ENCODE measurements at regions of chr17 and their contacts with region 1.

Region 1: GRCh38 chr17:50026901-50027630 is 28.8 kb upstream of the ITGA3 start:
- DNase-seq: peak; percentile 83
- H3K4me3 ChIP-seq: peak overlapping the region in 1 of 3 experiments; percentile 6
- H3K27ac ChIP-seq: peak overlapping the region; percentile 62
- H3K4me1 ChIP-seq: peaks cover 20% of the 10 kb centered on the region
- H3K27me3 ChIP-seq: no peaks in the 10 kb centered on the region
- CTCF ChIP-seq: peak; percentile 90 to 94
- POLR2A ChIP-seq: no peak

Region 2: GRCh38 chr17:49987681-49988441 is 39.2 kb before region 1 on chr17:
- CTCF ChIA-PET with region 1: no interaction called
- POLR2A ChIA-PET with region 1: no interaction called
- dilution Hi-C with region 1: no loop called
- intact Hi-C with region 1: no loop called
- DNase-seq: no peak
- H3K4me3 ChIP-seq: no peak overlapping the region
- H3K27ac ChIP-seq: no peak overlapping the region
- H3K4me1 ChIP-seq: no peaks in the 10 kb centered on the region
- H3K27me3 ChIP-seq: peaks cover 30 to 46% of the 10 kb centered on the region in 2 experiments
- CTCF ChIP-seq: no peak
- POLR2A ChIP-seq: no peak

Region 3: DNA sequence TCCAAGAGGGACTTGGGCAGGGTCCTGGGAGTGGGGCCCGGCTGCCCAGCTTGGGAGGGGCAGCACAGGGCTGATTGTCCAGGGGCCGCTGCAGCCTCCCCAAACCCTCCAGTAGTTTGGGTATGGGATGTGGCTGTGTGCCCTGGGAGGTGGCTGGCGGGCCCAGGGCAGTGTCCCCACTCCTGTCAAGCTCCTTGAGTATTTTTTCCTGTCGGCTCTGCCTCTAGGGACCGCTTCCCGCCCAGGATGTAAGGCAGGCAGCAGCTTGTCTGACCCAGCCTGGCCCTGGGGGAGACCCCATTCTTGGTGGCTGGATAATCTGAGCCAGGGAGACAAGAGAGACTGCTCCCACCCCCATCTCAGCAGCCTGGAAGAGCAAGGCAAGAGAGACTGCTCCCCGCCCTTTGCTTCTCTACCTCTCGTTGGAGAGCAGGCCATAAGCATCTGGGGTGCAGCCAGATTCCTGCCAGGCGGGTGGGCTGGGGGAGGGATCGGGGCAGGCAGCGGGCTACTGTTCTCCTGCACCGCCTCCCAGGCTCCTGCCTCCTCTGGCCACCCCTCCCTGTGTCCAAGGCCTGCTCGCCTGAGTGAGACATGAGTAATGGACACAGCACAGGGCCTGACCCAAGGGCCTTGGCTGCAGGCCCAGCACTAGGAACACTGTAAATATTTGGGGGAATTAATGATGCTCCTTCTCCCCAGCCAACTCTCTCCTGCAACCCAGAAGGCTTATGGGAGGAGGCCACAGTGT is 10.4 kb after region 1 on chr17:
- CTCF ChIA-PET with region 1: interaction called, 12 read pairs
- POLR2A ChIA-PET with region 1: no interaction called
- dilution Hi-C with region 1: no loop called
- intact Hi-C with region 1: no loop called
- DNase-seq: no peak
- H3K4me3 ChIP-seq: no peak overlapping the region
- H3K27ac ChIP-seq: no peak overlapping the region
- H3K4me1 ChIP-seq: no peaks in the 10 kb centered on the region
- H3K27me3 ChIP-seq: no peaks in the 10 kb centered on the region
- CTCF ChIP-seq: no peak
- POLR2A ChIP-seq: no peak

Region 4: GRCh38 chr17:50047488-50048126 is 20.5 kb after region 1 on chr17:
- CTCF ChIA-PET with region 1: interaction called, 146 read pairs
- POLR2A ChIA-PET with region 1: no interaction called
- dilution Hi-C with region 1: no loop called
- intact Hi-C with region 1: no loop called
- DNase-seq: peak; percentile 82
- H3K4me3 ChIP-seq: peak overlapping the region in 1 of 3 experiments; percentile 3
- H3K27ac ChIP-seq: peak overlapping the region; percentile 91
- H3K4me1 ChIP-seq: peaks cover 62% of the 10 kb centered on the region
- H3K27me3 ChIP-seq: no peaks in the 10 kb centered on the region
- CTCF ChIP-seq: no peak
- POLR2A ChIP-seq: peak; percentile 28

Region 5: DNA sequence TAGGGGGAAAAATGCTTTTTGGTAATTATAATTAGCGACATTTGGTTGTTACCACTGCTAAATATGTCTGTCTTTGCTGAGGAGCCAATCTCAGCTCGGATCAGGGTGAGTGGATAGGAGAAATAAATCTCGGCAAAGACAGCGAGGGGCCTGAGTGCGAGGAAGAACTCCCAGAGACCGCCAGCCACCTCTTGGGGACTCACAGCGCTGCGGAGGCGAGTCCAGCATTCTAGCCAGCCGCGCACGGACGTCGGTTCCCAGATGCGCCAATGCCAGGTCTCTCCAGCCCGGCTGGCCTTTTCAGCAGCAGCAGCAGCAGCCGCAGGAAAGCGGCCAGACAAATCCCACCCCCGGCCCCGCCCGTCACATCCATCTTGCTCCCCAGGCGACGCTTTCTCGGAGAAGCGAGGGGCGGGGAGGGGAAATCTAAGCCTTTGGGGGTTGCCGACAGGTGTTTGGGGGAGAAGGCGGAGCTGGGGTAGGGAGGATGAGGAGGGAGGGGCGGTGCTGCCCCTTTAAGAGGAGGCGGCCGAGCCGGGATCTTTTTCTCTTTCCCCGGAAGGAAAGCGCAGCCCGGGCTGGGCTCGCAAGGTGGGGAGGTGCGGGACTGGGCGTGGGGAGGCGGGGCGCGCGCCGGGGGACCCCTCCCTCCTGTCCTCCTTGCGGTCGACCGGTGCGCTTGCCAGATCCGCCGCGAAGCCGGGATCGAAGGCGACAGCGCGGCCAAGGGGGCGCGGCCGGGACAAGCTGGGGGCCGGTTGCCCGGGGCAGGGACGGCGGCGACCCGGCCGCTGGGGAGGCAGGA is 28.6 kb after region 1 on chr17 and contains the start of gene ITGA3:
- CTCF ChIA-PET with region 1: interaction called, 146 read pairs
- POLR2A ChIA-PET with region 1: interaction called, 13 read pairs
- dilution Hi-C with region 1: no loop called
- intact Hi-C with region 1: loop called (anchors 1 kb)
- DNase-seq: peak; percentile 80
- H3K4me3 ChIP-seq: peak within 1 kb of the TSS; percentile 65 to 77 (median 77)
- H3K27ac ChIP-seq: peak within 1 kb of the TSS; percentile 39
- H3K4me1 ChIP-seq: peaks cover 65% of the 10 kb centered on the region
- H3K27me3 ChIP-seq: no peaks in the 10 kb centered on the region
- CTCF ChIP-seq: no peak
- POLR2A ChIP-seq: peak; percentile 57
- total RNA-seq, gene ITGA3: 93.8 and 112 TPM in 2 replicates

Region 6: GRCh38 chr17:50064258-50065001 is 37.4 kb after region 1 on chr17:
- CTCF ChIA-PET with region 1: interaction called, 76 read pairs
- POLR2A ChIA-PET with region 1: no interaction called
- dilution Hi-C with region 1: no loop called
- intact Hi-C with region 1: no loop called
- DNase-seq: peak; percentile 82
- H3K4me3 ChIP-seq: no peak overlapping the region
- H3K27ac ChIP-seq: peak overlapping the region; percentile 63
- H3K4me1 ChIP-seq: peaks cover 38% of the 10 kb centered on the region
- H3K27me3 ChIP-seq: no peaks in the 10 kb centered on the region
- CTCF ChIP-seq: no peak
- POLR2A ChIP-seq: no peak

Region 7: DNA sequence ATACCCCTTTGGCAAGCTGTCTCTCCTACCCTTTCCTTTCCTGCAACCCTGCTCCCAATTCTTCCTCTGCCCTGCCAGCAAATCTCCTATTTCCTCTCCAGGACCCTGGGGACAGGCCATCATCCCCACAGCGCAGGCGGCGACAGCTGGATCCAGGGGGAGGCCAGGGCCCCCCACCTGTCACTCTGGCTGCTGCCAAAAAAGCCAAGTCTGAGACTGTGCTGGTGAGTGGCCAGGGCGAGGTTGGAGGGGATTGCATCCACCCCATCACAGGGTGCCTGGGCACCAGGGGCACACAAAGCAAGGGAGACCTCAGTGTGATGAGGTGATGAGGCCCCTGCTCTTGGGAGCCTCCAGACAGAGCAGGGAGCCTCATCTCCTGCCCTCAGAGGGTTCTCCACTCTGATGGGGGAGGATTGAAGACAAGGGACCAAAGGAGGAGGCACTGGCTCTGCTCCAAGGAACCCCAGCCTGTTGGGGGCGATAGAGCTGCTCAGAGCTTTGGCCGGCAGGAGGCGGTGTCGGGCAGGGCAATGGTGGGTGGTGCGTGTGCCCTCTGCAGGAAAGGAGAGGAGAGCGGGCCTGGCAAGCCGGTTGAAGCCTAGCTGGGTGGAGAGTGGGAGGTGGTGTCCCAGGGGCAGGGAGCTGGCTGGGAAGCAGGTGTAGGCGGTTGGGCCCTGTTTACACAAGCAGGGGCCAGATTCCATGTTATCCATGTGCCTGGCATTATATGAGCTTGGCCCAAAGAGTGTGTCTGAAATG is 52.4 kb after region 1 on chr17:
- CTCF ChIA-PET with region 1: interaction called, 84 read pairs
- POLR2A ChIA-PET with region 1: no interaction called
- dilution Hi-C with region 1: no loop called
- intact Hi-C with region 1: loop called (anchors 2 kb)
- DNase-seq: peak; percentile 17
- H3K4me3 ChIP-seq: no peak overlapping the region
- H3K27ac ChIP-seq: no peak overlapping the region
- H3K4me1 ChIP-seq: no peaks in the 10 kb centered on the region
- H3K27me3 ChIP-seq: no peaks in the 10 kb centered on the region
- CTCF ChIP-seq: peak; percentile 64 to 71
- POLR2A ChIP-seq: no peak

Region 8: DNA sequence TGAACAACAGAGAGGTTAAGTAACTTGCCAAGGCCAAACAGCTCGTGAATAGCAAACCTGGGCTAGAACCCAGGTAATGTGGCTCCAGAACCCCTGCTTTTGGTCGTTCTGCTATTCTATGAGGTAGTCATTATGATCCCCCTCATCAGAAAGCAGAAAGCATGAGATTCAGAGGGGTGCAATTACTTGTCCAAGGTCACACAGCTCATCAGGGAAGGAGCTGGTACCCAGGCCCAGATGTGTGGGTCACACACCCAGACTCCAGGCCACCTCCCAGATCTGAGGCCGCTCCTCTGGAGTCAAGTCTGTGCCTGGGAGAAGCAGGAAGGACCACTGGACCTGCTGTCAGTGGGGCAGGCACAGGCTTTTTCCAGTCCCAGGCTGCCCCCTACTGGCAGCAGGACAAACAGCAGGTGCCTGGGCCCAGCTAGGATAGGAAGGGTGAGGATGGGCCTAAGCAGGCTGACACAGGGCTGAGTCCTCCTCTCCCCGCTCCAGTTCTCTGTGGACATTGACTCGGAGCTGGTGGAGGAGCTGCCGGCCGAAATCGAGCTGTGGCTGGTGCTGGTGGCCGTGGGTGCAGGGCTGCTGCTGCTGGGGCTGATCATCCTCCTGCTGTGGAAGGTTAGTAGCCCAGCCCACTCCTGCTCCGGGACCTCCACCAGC is 60.3 kb after region 1 on chr17:
- CTCF ChIA-PET with region 1: interaction called, 101 read pairs
- POLR2A ChIA-PET with region 1: no interaction called
- dilution Hi-C with region 1: no loop called
- intact Hi-C with region 1: loop called (anchors 1 kb)
- DNase-seq: peak; percentile 64
- H3K4me3 ChIP-seq: no peak overlapping the region
- H3K27ac ChIP-seq: no peak overlapping the region
- H3K4me1 ChIP-seq: no peaks in the 10 kb centered on the region
- H3K27me3 ChIP-seq: no peaks in the 10 kb centered on the region
- CTCF ChIP-seq: peak; percentile 96
- POLR2A ChIP-seq: no peak